ENCODE measurements at regions of chr1 and their contacts with region 1.

Region 1: DNA sequence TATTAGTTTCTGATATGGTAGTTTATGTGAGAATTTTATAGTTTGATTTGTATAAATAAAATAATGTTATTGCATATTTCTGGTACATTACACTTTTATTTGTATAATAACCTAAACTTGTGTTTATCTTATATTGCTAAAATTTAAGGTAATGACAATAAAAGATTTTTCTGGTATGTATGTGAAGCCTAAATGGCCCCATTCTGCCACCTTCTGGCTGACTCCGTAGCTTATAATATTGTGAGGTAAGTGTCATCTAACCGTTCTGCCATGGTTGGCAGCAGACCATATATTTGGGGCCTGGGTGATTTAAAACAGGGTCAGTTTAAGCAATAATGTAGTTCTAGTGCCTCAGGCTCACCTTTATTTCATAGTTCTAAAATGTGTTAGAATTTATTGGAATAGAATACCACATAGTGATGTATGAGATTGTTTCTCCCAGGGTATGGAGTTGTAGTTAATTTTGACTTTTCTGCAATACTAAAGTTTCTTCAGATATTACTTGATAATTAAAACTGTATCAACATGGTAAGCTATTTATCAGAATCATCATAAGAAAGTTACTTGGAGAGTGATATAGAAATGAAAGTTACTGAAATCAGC is 21.2 kb upstream of the PRKACB start:
- DNase-seq: peak; percentile 15 to 73 (median 54)
- ATAC-seq: peak; percentile 68
- H3K4me3 ChIP-seq: no peak overlapping the region
- H3K4me3 Mint-ChIP-seq: no peak overlapping the region
- H3K27ac ChIP-seq: no peak overlapping the region
- H3K27ac Mint-ChIP-seq: no peak overlapping the region
- H3K4me1 ChIP-seq: no peaks in the 10 kb centered on the region
- H3K4me1 Mint-ChIP-seq: no peaks in the 10 kb centered on the region
- H3K27me3 ChIP-seq: no peaks in the 10 kb centered on the region
- H3K27me3 Mint-ChIP-seq: no peaks in the 10 kb centered on the region
- CTCF ChIP-seq: peak; percentile 90

Region 2: GRCh38 chr1:83791821-83792437 is 331.0 kb before region 1 on chr1:
- CTCF ChIA-PET with region 1: no interaction called
- POLR2A ChIA-PET with region 1: no interaction called
- intact Hi-C with region 1: no loop called
- DNase-seq: no peak
- ATAC-seq: no peak
- H3K4me3 ChIP-seq: no peak overlapping the region
- H3K4me3 Mint-ChIP-seq: no peak overlapping the region
- H3K27ac ChIP-seq: no peak overlapping the region
- H3K27ac Mint-ChIP-seq: no peak overlapping the region
- H3K4me1 ChIP-seq: no peaks in the 10 kb centered on the region
- H3K4me1 Mint-ChIP-seq: no peaks in the 10 kb centered on the region
- H3K27me3 ChIP-seq: no peaks in the 10 kb centered on the region
- H3K27me3 Mint-ChIP-seq: no peaks in the 10 kb centered on the region
- CTCF ChIP-seq: no peak

Region 3: DNA sequence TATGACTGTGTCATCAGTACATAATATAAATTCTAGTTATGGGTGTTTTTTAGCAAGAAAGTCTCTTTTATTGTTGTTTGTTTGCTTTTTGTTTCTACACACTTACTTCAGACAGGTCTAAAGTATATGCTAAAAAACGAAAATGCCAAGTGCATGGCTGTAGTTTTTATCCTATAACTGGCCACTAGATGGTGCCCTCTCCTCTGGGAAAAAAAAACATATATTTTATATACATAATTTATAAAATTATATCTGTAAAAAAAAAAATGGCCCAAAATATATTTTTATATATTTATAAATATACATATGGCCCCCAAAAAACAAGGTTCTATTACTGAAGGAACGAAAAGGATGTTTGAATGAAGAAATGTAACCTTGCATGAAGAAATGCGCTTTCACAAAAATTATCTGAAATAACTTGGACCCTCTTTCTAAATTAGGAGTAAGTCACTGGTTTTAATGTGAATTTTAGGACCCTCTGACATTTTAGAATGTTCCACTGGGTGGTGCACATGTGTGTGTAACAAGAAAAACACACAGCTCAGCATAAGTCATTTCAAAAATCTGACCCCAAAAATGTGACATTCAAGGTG is 217.5 kb before region 1 on chr1:
- CTCF ChIA-PET with region 1: interaction called, 4 read pairs
- POLR2A ChIA-PET with region 1: no interaction called
- intact Hi-C with region 1: loop called (anchors 1 kb)
- DNase-seq: peak in 3 of 9 experiments; percentile 7 to 50 (median 40)
- ATAC-seq: peak; percentile 46
- H3K4me3 ChIP-seq: no peak overlapping the region
- H3K4me3 Mint-ChIP-seq: no peak overlapping the region
- H3K27ac ChIP-seq: no peak overlapping the region
- H3K27ac Mint-ChIP-seq: no peak overlapping the region
- H3K4me1 ChIP-seq: no peaks in the 10 kb centered on the region
- H3K4me1 Mint-ChIP-seq: no peaks in the 10 kb centered on the region
- H3K27me3 ChIP-seq: no peaks in the 10 kb centered on the region
- H3K27me3 Mint-ChIP-seq: peaks cover 9% of the 10 kb centered on the region
- CTCF ChIP-seq: peak; percentile 79

Region 4: GRCh38 chr1:83931658-83932253 is 191.1 kb before region 1 on chr1:
- CTCF ChIA-PET with region 1: interaction called, 68 read pairs
- POLR2A ChIA-PET with region 1: no interaction called
- intact Hi-C with region 1: loop called (anchors 1 kb)
- DNase-seq: peak in 3 of 9 experiments; percentile 11 to 69 (median 58)
- ATAC-seq: peak; percentile 69
- H3K4me3 ChIP-seq: no peak overlapping the region
- H3K4me3 Mint-ChIP-seq: no peak overlapping the region
- H3K27ac ChIP-seq: no peak overlapping the region
- H3K27ac Mint-ChIP-seq: no peak overlapping the region
- H3K4me1 ChIP-seq: no peaks in the 10 kb centered on the region
- H3K4me1 Mint-ChIP-seq: no peaks in the 10 kb centered on the region
- H3K27me3 ChIP-seq: no peaks in the 10 kb centered on the region
- H3K27me3 Mint-ChIP-seq: peaks cover 7% of the 10 kb centered on the region
- CTCF ChIP-seq: peak; percentile 86

Measured in CD8-positive, alpha-beta T cell (primary cell).